Transverse colon (tissue), 4 donors: ENCODE measurements at regions of chr19 and their contacts with region 1.

Region 1: GRCh38 chr19:18063463-18063862 is 23.3 kb downstream of the IL12RB1 start:
- DNase-seq: no peak
- H3K4me3 ChIP-seq: no peak overlapping the region
- H3K27ac ChIP-seq: no peak overlapping the region
- H3K4me1 ChIP-seq: peaks cover 0 to 3% (median 2%) of the 10 kb centered on the region in 4 donors
- H3K27me3 ChIP-seq: peaks cover 7% of the 10 kb centered on the region
- CTCF ChIP-seq: no peak
- EP300 ChIP-seq: no peak
- POLR2A ChIP-seq: no peak

Region 2: DNA sequence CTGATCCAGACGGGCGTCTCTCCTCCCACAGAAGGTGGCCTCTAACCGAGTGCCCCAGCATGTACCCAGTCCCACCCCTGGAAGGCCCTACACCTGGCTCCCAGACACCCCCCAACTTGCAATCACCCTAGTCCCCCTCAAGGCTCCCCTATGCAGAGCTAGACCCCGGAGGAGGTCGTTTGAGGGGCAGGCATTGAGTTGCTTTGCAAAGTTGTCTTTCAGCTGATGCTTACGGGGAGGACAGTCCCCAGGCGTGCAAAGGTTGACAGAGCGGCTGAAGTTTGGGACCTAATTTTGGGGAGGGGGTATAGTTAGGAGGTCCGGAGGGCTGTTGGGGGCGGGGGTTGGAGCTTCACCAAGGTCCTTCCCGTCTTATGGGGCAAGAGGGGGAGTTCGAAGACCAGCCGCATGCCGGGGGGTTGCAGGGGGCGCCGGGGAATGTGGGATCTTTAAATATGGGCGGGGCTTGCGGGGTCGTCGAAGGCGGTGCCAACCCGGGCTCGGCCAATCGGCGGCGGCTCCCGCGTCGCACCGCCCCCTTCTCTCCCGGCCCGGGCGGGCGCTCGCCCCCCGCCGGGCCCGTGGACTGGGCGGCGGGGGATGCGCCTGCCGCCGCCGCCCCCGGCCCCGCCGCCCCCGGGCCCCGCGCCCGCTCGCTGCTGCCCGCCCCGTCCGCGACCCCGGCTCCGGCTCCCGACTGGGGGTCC is 96.8 kb before region 1 on chr19 and contains the start of gene KCNN1:
- in situ Hi-C with region 1: no loop called
- intact Hi-C with region 1: no loop called
- DNase-seq: no peak
- H3K4me3 ChIP-seq: peak within 1 kb of the TSS in 1 of 4 donors; percentile 15
- H3K27ac ChIP-seq: no peak within 1 kb of the TSS
- H3K4me1 ChIP-seq: no peaks in the 10 kb centered on the region
- H3K27me3 ChIP-seq: peaks cover 50% of the 10 kb centered on the region
- CTCF ChIP-seq: no peak
- EP300 ChIP-seq: no peak
- POLR2A ChIP-seq: no peak
- total RNA-seq, gene KCNN1: 1.6 TPM in 1 of 4 donors, not detected in the others

Region 3: DNA sequence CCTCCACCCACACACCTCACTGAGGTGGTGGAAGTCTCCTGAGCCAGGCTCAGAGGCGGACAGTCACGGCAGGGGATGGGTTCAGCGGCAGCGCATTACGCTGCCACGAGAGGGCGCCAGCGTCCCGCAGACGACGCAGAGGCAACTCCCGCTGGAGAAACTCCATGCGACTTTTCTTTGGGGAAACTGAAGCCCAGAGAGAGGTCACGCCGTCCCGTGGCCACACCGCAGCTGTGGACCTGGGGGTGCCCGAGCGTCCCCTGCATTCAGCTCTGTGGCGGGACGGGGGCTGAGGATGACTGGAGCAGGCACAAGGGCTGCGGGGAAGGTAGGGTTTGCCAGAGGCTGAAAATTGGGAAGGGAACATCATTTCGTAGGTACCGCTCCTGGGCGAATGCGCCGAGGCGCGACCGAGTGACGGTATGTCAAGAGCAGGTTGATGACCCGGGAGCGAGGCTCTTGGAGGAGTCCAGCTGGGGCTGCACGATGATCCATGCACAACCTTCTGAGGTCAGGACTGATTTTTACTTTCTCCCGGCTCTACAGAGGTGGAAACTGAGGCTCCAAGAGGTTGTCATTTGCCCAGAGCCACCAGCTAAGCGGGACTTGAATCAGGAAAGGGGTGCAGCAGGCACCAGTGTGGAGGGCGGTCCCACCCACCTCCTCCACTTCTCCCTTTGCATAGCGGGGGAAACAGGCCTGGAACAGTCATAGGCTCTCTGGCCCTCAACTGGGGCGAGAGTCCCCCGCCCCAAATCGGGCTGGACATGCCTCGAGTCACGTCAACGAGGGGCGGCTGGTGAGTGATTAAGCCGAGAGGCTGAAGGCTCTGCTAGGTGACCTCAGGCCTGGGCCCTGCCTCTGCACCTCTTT is 56.2 kb before region 1 on chr19:
- in situ Hi-C with region 1: loop called (anchors 5 to 10 kb)
- intact Hi-C with region 1: loop called (anchors 2 kb)
- DNase-seq: peak; percentile 88
- H3K4me3 ChIP-seq: peak overlapping the region; percentile 3 to 52 (median 40)
- H3K27ac ChIP-seq: peak overlapping the region; percentile 80 to 89 (median 86)
- H3K4me1 ChIP-seq: peaks cover 0 to 26% (median 18%) of the 10 kb centered on the region in 4 donors
- H3K27me3 ChIP-seq: no peaks in the 10 kb centered on the region
- CTCF ChIP-seq: peak; percentile 95 to 99 (median 98)
- EP300 ChIP-seq: no peak
- POLR2A ChIP-seq: peak; percentile 11

Region 4: DNA sequence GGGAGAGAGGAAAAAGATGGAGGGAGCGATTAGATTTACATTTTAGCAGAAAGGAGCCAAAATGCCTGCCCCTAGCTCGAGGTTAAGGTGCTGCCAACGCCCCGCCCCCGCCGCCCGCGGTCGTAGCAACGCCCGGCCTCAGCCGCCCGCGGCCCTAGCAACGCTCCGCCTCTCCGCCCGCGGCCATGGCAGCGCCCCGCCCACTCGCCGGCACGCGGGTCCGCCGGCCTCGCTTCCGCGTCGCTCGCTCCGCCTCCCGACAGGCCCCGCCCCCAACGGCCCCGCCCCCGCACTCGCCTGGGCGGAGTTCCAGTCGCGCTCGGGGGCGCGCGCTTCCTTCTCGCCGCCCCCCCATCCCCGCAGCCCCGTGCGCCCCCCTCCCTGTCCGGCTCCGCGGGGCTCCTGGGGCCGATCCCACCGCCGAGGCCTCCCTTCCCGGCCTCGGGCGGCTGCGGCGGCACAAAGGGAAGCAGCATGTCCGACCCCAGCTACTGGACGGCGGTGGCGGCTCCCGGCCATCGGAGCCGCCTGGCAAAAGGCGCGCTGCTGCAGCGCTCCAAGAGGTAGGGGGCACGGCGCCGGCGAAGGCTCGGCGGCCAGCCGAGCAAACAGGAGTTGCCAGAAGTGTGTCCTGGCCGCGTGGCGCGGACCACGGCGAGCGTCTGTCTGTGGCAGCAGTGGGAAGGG is 54.4 kb after region 1 on chr19:
- in situ Hi-C with region 1: no loop called
- intact Hi-C with region 1: no loop called
- DNase-seq: peak; percentile 95
- H3K4me3 ChIP-seq: peak overlapping the region; percentile 66 to 93 (median 77)
- H3K27ac ChIP-seq: peak overlapping the region; percentile 80 to 85 (median 83)
- H3K4me1 ChIP-seq: peaks cover 10 to 24% (median 18%) of the 10 kb centered on the region in 4 donors
- H3K27me3 ChIP-seq: no peaks in the 10 kb centered on the region
- CTCF ChIP-seq: no peak
- EP300 ChIP-seq: no peak
- POLR2A ChIP-seq: no peak